ENCODE measurements at regions of chr6 and their contacts with region 1.

Region 1: GRCh38 chr6:127951172-127951917 is 50.5 kb upstream of the THEMIS start:
- DNase-seq: no peak
- H3K4me3 Mint-ChIP-seq: peak overlapping the region; percentile 32
- H3K27ac Mint-ChIP-seq: peak overlapping the region; percentile 85
- H3K4me1 Mint-ChIP-seq: peaks cover 43% of the 10 kb centered on the region
- H3K27me3 Mint-ChIP-seq: no peaks in the 10 kb centered on the region

Region 2: DNA sequence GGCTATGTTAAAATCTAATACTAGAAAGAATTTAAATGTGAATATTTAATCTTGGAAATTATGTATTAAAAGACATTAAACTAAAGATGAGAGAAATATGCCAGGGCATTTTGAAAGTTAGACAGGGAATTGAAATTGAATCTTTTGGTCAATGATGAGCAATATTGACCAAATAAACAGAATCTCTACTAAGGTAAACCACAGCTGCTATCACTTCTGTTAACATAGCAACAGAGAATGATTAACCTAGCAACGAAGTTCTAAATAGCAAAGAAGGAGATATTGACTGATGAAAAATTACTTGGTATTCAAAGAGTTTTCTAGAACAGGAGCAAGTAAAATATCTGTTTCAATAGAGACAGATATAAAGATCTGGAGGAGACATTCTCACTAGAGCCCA is 878.1 kb before region 1 on chr6:
- intact Hi-C with region 1: no loop called
- DNase-seq: no peak
- H3K4me3 Mint-ChIP-seq: no peak overlapping the region
- H3K27ac Mint-ChIP-seq: no peak overlapping the region
- H3K4me1 Mint-ChIP-seq: no peaks in the 10 kb centered on the region
- H3K27me3 Mint-ChIP-seq: peaks cover 5% of the 10 kb centered on the region

Region 3: DNA sequence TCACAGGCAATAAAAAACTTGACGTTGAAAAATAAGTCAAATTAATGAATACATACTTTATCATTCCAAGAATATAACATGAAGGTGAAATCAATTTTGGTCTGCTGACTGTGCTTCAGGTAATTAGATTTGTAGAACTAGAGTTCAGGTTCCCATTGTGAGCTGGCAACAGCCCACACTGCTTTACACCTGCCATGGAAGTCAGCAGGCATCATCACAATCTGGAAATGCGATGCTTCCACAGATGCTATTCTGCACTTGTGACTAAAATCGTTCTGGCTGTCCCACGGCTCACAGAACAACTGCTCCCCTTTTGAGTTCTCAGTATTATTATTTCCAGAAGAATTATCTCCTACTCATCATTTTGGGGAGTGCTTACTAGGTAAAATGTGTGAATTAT is 12.2 kb after region 1 on chr6:
- intact Hi-C with region 1: loop called (anchors 1 kb)
- DNase-seq: no peak
- H3K4me3 Mint-ChIP-seq: no peak overlapping the region
- H3K27ac Mint-ChIP-seq: no peak overlapping the region
- H3K4me1 Mint-ChIP-seq: peaks cover 30% of the 10 kb centered on the region
- H3K27me3 Mint-ChIP-seq: no peaks in the 10 kb centered on the region